Endothelial cell of umbilical vein (primary cell): ENCODE measurements at regions of chr2 and their contacts with region 1.

Region 1: DNA sequence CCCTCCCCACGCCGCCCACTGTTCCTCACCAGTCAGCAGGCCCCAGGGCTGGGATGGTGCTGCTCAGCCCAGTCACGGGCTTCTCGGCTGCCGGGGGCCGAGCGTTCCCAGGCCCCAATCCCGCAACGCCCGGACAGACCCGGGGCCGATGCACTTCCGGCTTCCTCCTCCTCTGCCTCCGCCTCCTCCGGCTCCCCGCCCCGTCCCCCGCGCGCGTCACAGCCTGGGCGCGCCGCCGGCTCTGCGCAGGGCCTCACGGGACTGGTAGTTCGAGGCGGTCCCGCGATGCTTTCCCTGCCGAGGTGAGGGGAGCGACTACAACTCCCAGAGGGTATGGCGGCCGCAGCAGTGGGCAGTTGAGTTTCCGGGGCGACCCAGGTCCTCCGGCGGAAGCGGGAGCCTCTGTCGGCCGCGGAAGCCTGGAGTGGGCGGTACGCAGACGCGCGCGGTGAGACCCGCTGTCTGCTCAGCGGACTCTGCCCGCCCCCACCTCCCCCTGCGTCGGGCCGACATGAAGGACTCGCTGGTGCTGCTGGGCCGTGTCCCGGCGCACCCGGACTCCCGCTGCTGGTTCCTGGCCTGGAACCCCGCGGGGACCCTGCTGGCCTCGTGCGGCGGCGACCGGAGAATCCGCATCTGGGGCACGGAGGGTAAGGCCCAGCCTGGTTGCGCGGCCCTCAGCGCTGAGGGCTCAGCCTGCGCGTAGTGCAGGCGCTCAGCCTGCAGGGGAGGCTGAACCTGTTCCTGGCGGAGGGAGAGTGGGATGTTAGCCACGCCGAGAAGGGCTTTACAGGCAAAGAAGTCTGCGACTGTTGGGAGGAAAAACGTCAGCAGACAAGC is at the starts of genes CIAO1 and TMEM127:
- DNase-seq: peak; percentile 99
- H3K4me3 ChIP-seq: peak within 1 kb of the TSS; percentile 73 to 92 (median 91)
- H3K27ac ChIP-seq: peak within 1 kb of the TSS; percentile 63
- H3K4me1 ChIP-seq: peaks cover 20% of the 10 kb centered on the region
- H3K27me3 ChIP-seq: no peaks in the 10 kb centered on the region
- CTCF ChIP-seq: peak; percentile 26 to 62
- POLR2A ChIP-seq: peak; percentile 71
- total RNA-seq, gene CIAO1: 64.3 and 70.7 TPM in 2 replicates
- total RNA-seq, gene TMEM127: 41.5 and 48.4 TPM in 2 replicates

Region 2: GRCh38 chr2:96138179-96139145 is 127.6 kb before region 1 on chr2 and contains the start of gene ASTL:
- CTCF ChIA-PET with region 1: interaction called, 32 read pairs
- POLR2A ChIA-PET with region 1: no interaction called
- dilution Hi-C with region 1: no loop called
- intact Hi-C with region 1: loop called (anchors 1 kb)
- DNase-seq: peak; percentile 19
- H3K4me3 ChIP-seq: no peak within 1 kb of the TSS
- H3K27ac ChIP-seq: no peak within 1 kb of the TSS
- H3K4me1 ChIP-seq: no peaks in the 10 kb centered on the region
- H3K27me3 ChIP-seq: peaks cover 0 to 3% of the 10 kb centered on the region in 2 experiments
- CTCF ChIP-seq: peak; percentile 26 to 68
- POLR2A ChIP-seq: no peak
- total RNA-seq, gene ASTL: not detected in 2 replicates

Region 3: GRCh38 chr2:96208143-96209010 is 57.7 kb before region 1 on chr2 and contains the start of gene STARD7:
- CTCF ChIA-PET with region 1: interaction called, 17 read pairs
- POLR2A ChIA-PET with region 1: interaction called, 10 read pairs
- dilution Hi-C with region 1: no loop called
- intact Hi-C with region 1: loop called (anchors 1 kb)
- DNase-seq: peak; percentile 97
- H3K4me3 ChIP-seq: peak within 1 kb of the TSS; percentile 84 to 99 (median 98)
- H3K27ac ChIP-seq: peak within 1 kb of the TSS; percentile 87
- H3K4me1 ChIP-seq: peaks cover 36% of the 10 kb centered on the region
- H3K27me3 ChIP-seq: no peaks in the 10 kb centered on the region
- CTCF ChIP-seq: peak; percentile 4 to 19
- POLR2A ChIP-seq: peak; percentile 89
- total RNA-seq, gene STARD7: 107 and 132 TPM in 2 replicates

Region 4: GRCh38 chr2:96251721-96252292 is 14.3 kb before region 1 on chr2:
- CTCF ChIA-PET with region 1: interaction called, 16 read pairs
- POLR2A ChIA-PET with region 1: interaction called, 3 read pairs
- dilution Hi-C with region 1: no loop called
- intact Hi-C with region 1: no loop called
- DNase-seq: peak; percentile 96
- H3K4me3 ChIP-seq: no peak overlapping the region
- H3K27ac ChIP-seq: peak overlapping the region; percentile 28
- H3K4me1 ChIP-seq: peaks cover 39% of the 10 kb centered on the region
- H3K27me3 ChIP-seq: no peaks in the 10 kb centered on the region
- CTCF ChIP-seq: no peak
- POLR2A ChIP-seq: peak; percentile 27

Region 5: GRCh38 chr2:96305091-96305978 is 39.3 kb after region 1 on chr2 and contains the start of gene SNRNP200:
- CTCF ChIA-PET with region 1: no interaction called
- POLR2A ChIA-PET with region 1: no interaction called
- dilution Hi-C with region 1: no loop called
- intact Hi-C with region 1: loop called (anchors 5 kb)
- DNase-seq: peak; percentile 74
- H3K4me3 ChIP-seq: peak within 1 kb of the TSS; percentile 60 to 81 (median 78)
- H3K27ac ChIP-seq: peak within 1 kb of the TSS; percentile 63
- H3K4me1 ChIP-seq: peaks cover 11% of the 10 kb centered on the region
- H3K27me3 ChIP-seq: no peaks in the 10 kb centered on the region
- CTCF ChIP-seq: no peak
- POLR2A ChIP-seq: peak; percentile 58
- total RNA-seq, gene SNRNP200: 117 and 124 TPM in 2 replicates

Region 6: DNA sequence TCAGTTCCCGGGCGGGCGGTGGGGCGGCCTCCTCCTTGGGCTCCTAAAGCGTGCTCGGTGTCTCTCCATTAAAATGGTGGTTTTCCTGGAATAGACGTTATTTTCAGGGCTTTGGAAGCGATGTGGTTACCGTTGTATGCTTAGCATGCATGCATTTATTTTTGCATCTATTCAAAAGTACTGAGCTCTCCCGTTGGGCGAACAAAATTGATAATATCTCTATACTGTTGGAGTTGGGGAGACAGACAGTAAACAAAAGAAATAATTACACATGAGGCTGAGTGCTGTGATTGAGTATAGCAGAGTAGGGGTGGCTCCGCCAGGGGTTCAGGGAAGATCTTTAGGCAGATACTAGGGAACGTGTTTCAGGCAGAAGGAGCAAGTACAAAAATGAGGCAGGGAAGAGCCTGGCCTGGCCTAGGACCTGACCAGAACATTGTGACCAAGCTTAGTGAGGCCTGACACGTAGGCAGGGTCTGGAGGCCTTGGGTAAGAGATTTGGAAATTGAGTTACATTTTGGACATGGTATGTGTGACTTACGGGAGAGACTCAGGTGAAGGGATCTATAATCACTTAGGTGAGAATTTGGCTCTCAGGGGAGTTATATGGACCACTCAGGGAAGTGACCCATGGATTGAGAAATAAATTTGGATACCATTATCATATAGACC is 70.2 kb after region 1 on chr2:
- CTCF ChIA-PET with region 1: interaction called, 6 read pairs
- POLR2A ChIA-PET with region 1: no interaction called
- dilution Hi-C with region 1: no loop called
- intact Hi-C with region 1: loop called (anchors 5 kb)
- DNase-seq: no peak
- H3K4me3 ChIP-seq: peak overlapping the region; percentile 75 to 90 (median 90)
- H3K27ac ChIP-seq: peak overlapping the region; percentile 50
- H3K4me1 ChIP-seq: peaks cover 15% of the 10 kb centered on the region
- H3K27me3 ChIP-seq: no peaks in the 10 kb centered on the region
- CTCF ChIP-seq: no peak
- POLR2A ChIP-seq: peak; percentile 63

Region 7: DNA sequence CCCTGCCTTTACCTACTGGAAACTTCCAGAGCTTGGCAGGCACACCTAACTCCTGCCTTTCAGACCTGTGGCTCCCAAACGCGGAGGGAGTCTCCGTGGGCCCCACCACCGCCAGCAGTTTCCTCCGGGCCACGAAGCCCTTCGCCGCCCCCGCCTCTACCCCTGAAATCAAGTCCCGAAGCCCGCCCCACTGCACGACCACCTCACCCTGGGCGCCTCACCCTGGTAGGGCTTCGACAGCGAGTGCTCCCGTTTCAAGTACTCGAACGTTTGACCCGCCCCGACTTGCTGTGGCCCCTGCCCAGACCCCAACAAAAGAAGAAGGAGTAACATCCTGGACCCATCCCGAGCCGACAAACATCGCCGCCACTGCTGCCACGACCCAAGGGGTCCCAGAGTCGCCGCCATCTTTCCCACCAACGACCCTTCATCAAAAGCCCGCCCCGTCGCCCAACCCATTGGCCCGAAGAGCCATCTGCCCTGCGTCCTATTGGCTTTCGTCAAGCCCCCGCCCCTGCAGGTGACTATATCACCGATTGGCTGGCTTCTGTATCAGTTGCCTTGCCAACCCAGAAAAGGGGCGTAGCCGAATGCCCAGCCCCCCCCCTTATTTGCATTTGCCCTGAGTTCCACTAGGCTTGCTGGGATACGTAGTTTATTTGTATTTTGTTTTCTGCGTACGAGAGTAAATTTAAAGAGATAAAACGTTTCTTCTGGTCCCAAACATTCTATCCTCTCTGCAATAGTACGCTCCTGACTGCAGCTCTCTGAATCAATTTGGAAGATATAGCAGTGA is 473.8 kb after region 1 on chr2 and contains the start of gene LMAN2L:
- CTCF ChIA-PET with region 1: no interaction called
- POLR2A ChIA-PET with region 1: no interaction called
- dilution Hi-C with region 1: no loop called
- intact Hi-C with region 1: loop called (anchors 5 kb)
- DNase-seq: peak; percentile 98
- H3K4me3 ChIP-seq: peak within 1 kb of the TSS; percentile 76 to 91 (median 84)
- H3K27ac ChIP-seq: peak within 1 kb of the TSS; percentile 58
- H3K4me1 ChIP-seq: peaks cover 16% of the 10 kb centered on the region
- H3K27me3 ChIP-seq: peaks cover 0 to 2% of the 10 kb centered on the region in 2 experiments
- CTCF ChIP-seq: no peak
- POLR2A ChIP-seq: peak; percentile 85
- total RNA-seq, gene LMAN2L: 15.4 and 18.2 TPM in 2 replicates